ENCODE measurements at regions of chr20 and their contacts with region 1.

Region 1: GRCh38 chr20:32445539-32446273 is 87.6 kb downstream of the ASXL1 start:
- DNase-seq: peak; percentile 39 to 53
- H3K4me3 ChIP-seq: no peak overlapping the region
- H3K4me3 Mint-ChIP-seq: no peak overlapping the region
- H3K27ac Mint-ChIP-seq: peak overlapping the region; percentile 9
- H3K4me1 ChIP-seq: 0 out of 2 replicates have a peak, but pooled peaks cover 5% of the 10 kb centered on the region
- H3K4me1 Mint-ChIP-seq: peaks cover 22% of the 10 kb centered on the region
- H3K27me3 ChIP-seq: no peaks in the 10 kb centered on the region
- H3K27me3 Mint-ChIP-seq: no peaks in the 10 kb centered on the region
- CTCF ChIP-seq: no peak

Region 2: DNA sequence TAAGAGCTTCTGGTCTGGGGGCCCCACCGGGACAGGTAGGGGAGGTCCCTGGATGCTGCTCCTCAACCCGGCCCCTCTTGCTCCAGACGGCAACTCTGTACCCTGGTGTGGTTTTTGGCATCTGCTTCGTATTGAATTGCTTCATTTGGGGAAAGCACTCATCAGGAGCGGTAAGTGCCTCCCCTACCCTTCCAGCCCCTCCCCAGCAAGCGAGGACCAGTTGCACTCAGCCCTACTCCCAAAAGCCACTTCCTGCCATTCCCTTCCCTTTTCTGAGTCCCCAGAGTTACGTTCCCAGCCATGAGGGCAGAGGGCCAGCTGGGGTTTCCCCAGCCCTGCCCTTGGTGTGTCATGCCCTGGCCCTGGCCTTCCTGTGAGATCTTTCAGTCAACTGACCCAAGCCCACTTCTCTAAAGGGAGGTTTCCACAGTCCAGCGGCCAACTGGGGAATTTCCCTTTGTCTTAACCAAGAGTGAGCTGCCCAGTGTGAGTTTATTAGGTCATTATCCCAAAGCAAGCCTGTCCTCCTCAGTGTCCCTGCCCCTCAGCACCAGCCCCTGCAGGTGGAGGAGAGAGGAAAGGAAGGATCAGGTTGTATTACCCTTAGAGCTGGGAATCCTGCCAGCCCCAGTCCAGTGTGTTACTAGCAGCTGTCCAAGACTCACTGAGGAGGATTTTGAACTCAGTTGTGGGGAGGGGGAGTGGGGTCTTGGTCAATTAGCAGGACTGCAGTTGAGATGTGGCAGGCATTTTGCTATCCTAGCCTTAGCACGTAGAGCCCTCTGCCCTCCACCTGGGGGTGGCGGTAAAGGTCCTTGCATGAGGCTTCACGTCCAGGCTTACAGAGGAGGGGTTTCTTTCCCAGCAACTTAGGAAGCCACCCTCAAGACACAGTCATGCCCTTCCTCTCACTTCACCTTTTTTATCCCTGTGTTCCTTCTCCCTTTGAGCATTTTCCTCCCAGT is 290.4 kb before region 1 on chr20:
- CTCF ChIA-PET with region 1: no interaction called
- POLR2A ChIA-PET with region 1: no interaction called
- intact Hi-C with region 1: loop called (anchors 5 kb)
- DNase-seq: peak; percentile 84 to 86
- H3K4me3 ChIP-seq: no peak overlapping the region
- H3K4me3 Mint-ChIP-seq: no peak overlapping the region
- H3K27ac Mint-ChIP-seq: no peak overlapping the region
- H3K4me1 ChIP-seq: peaks cover 6% of the 10 kb centered on the region
- H3K4me1 Mint-ChIP-seq: peaks cover 8% of the 10 kb centered on the region
- H3K27me3 ChIP-seq: no peaks in the 10 kb centered on the region
- H3K27me3 Mint-ChIP-seq: no peaks in the 10 kb centered on the region
- CTCF ChIP-seq: peak; percentile 73 to 92